PC-3 (cell line): ENCODE measurements at regions of chr7 and their contacts with region 1.

Region 1: DNA sequence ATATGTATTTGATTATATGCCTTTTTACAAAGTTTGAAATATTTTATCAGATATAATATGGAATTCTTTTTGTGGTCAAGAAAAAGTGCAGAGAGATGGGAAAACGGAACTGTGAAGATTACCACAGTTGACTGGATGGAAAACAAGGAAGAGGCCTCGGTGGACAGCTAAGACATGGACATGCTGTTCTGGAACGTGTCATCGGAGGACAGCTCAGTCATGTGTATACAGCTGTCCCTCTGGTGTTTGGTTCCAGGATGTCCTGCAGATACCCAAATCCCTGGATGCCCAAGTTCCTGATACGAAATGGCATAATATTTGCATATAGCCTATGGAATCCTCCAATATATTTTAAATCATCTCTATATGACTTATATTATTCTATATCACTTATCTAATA is 49.4 kb downstream of the TRIL start:
- DNase-seq: no peak
- ATAC-seq: no peak
- H3K4me3 ChIP-seq: no peak overlapping the region
- H3K27ac ChIP-seq: no peak overlapping the region
- H3K4me1 ChIP-seq: no peaks in the 10 kb centered on the region
- H3K27me3 ChIP-seq: no peaks in the 10 kb centered on the region
- CTCF ChIP-seq: no peak

Region 2: GRCh38 chr7:28879105-28879504 is 29.7 kb before region 1 on chr7:
- CTCF ChIA-PET with region 1: no interaction called
- POLR2A ChIA-PET with region 1: no interaction called
- intact Hi-C with region 1: no loop called
- DNase-seq: no peak
- ATAC-seq: no peak
- H3K4me3 ChIP-seq: no peak overlapping the region
- H3K27ac ChIP-seq: no peak overlapping the region
- H3K4me1 ChIP-seq: no peaks in the 10 kb centered on the region
- H3K27me3 ChIP-seq: no peaks in the 10 kb centered on the region
- CTCF ChIP-seq: no peak; the same call in 1 of the 2 replicates

Region 3: DNA sequence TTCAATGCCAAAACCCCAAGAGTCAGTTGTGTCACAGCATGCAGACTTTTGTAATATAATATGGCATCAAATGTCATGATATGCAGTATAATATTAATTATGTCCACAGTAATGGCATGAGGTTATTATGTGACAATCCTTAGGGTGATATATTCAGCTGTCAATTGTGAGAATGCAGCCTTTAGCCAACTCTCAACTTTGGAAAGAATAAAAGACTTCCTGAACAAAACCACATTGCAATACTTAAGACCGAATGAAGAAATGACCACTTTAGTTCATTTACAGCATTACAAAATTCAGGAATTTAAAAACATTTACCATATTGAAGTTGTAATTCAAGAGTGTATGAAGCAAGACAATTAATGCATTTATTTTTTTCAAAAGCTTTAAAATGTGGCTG is 192.1 kb after region 1 on chr7:
- CTCF ChIA-PET with region 1: interaction called, 10 read pairs
- POLR2A ChIA-PET with region 1: no interaction called
- intact Hi-C with region 1: no loop called
- DNase-seq: no peak
- ATAC-seq: no peak
- H3K4me3 ChIP-seq: no peak overlapping the region
- H3K27ac ChIP-seq: no peak overlapping the region
- H3K4me1 ChIP-seq: no peaks in the 10 kb centered on the region
- H3K27me3 ChIP-seq: no peaks in the 10 kb centered on the region
- CTCF ChIP-seq: no peak